RWPE1 (cell line): ENCODE measurements at regions of chr12 and their contacts with region 1.

Region 1: DNA sequence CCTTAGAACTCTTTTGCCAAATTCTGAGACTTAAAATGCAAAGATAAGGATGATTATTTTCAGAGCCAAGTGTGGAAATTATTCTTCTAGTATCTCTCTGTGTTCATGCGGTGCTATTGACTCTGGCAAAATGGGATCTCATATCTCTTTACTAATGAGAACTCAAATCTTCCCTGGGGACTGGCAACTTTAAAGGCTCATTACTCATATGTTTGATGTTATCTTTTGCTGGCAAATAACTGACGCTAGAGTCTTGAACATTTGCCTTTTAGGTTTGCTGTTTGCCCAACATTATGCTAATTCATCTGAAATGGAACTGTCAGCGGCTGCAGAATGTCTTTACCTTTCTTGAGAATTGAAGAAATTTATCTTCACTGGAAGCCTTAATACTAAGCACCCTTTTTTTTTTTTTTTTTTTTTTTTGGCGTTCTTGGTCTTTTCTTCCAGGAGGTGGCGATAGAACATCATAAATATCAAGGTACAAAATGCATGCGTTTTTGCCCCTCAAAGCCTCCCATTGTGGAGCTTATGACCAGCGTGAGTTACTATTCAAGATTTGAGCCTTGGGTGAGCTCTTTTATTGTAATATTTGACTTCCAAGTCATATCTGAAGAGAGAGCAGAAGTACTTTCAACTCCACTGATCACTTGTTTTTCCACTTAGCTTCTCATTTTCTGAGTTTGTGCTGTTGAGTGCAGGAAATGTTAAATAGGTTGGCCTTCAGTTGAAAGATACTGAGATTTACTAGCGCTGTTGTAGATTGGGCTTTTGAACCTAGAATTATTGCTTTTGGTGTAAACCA is 86.6 kb downstream of the CAND1 start:
- DNase-seq: peak; percentile 19
- H3K27ac ChIP-seq: no peak overlapping the region
- CTCF ChIP-seq: peak; percentile 54; the same call in 1 of the 2 replicates

Region 2: GRCh38 chr12:66087365-66087943 is 1268.3 kb before region 1 on chr12:
- CTCF ChIA-PET with region 1: no interaction called
- POLR2A ChIA-PET with region 1: no interaction called
- DNase-seq: peak; percentile 55
- H3K27ac ChIP-seq: no peak overlapping the region
- CTCF ChIP-seq: peak; percentile 89

Region 3: GRCh38 chr12:67268896-67269631 is 86.7 kb before region 1 on chr12 and contains the start of gene CAND1:
- CTCF ChIA-PET with region 1: no interaction called
- POLR2A ChIA-PET with region 1: no interaction called
- DNase-seq: peak; percentile 95
- H3K27ac ChIP-seq: peak within 1 kb of the TSS; percentile 99
- CTCF ChIP-seq: no peak

Region 4: DNA sequence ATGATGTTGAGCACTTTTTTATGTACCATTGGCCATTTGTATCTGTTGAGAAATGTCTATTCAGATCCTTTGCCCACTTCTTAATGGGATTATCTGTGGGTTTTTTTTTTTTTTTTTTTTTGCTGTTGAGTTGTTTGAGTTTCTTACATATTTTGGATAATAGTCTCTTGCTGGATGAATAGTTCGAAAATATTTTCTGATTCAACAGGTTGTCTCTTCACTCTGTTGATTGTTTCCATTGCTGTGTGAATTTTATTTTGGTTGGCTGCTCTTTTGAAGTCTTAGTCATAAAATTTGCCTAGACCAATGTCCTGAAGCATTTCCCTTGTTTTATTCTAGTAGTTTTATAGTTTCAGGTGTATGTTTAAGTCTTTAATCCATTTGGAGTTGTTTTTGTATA is 22.1 kb before region 1 on chr12:
- CTCF ChIA-PET with region 1: no interaction called
- POLR2A ChIA-PET with region 1: no interaction called
- DNase-seq: no peak
- H3K27ac ChIP-seq: no peak overlapping the region
- CTCF ChIP-seq: no peak

Region 5: GRCh38 chr12:67344979-67345710 is 10.6 kb before region 1 on chr12:
- CTCF ChIA-PET with region 1: interaction called, 14 read pairs
- POLR2A ChIA-PET with region 1: no interaction called
- DNase-seq: no peak
- H3K27ac ChIP-seq: no peak overlapping the region
- CTCF ChIP-seq: no peak

Region 6: DNA sequence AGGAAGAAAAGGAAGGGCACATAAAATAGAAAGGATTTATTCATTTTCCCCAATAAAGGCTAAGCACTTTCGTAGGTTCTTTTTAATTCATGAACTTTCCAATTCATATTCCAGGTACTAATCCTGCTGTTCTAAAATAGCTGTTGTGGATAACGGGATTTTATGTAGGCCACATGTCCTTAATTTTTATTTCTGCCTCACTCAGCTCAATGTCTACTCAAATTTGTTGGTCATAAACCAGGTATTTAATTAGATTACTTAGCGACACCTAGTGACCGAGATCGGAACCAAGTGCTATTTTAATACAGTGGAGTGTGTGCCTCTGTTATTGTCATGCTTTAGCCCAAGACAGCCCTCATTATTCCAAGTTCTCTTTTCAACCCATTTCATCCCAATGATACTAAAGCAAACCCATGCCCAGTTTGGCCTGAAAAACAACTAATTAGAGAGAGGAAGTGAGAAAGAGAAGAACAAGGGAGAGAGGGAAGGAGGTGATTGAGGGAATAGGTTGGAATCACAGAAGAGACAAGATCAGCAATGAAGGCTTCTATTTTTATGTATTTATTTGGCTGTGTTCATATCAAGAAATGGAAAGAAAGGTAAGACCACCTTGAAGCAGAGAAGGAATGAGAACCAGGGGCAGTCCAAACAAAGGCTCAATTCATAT is 587.6 kb after region 1 on chr12:
- CTCF ChIA-PET with region 1: interaction called, 11 read pairs
- POLR2A ChIA-PET with region 1: no interaction called
- DNase-seq: peak; percentile 55
- H3K27ac ChIP-seq: no peak overlapping the region
- CTCF ChIP-seq: peak; percentile 73